ENCODE measurements at regions of chr7 and their contacts with region 1.

Region 1: GRCh38 chr7:108181073-108181985 is 51.2 kb upstream of the LAMB4 start:
- DNase-seq: no peak
- H3K4me3 ChIP-seq: no peak overlapping the region
- H3K27ac ChIP-seq: no peak overlapping the region
- H3K4me1 ChIP-seq: no peaks in the 10 kb centered on the region
- H3K27me3 ChIP-seq: no peaks in the 10 kb centered on the region
- CTCF ChIP-seq: peak; percentile 59 to 81 (median 64)
- POLR2A ChIP-seq: no peak

Region 2: DNA sequence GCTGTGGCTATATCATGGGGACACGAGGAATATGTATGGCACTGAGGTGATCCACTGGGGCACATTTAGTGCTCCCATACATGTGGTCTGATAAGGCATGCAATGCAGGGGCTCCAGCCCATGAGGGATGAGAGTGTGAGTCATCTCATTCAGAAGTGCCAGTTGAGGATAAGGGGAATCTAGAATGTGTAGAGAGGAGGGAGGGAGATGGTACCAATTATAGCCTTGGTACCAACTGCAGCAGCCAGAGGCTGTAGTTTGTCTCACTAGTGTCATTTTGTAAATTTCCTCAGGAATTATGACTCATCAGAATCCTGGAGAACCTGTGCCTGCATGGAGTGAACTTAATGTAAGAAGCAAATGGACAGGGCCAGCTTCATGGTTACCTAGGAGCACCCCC is 97.3 kb before region 1 on chr7:
- intact Hi-C with region 1: no loop called
- DNase-seq: no peak
- H3K4me3 ChIP-seq: no peak overlapping the region
- H3K27ac ChIP-seq: no peak overlapping the region
- H3K4me1 ChIP-seq: peaks cover 0 to 16% (median 14%) of the 10 kb centered on the region in 3 donors
- H3K27me3 ChIP-seq: no peaks in the 10 kb centered on the region
- CTCF ChIP-seq: no peak
- POLR2A ChIP-seq: no peak

Region 3: GRCh38 chr7:108313086-108313485 is 131.8 kb after region 1 on chr7:
- intact Hi-C with region 1: no loop called
- DNase-seq: no peak
- H3K4me3 ChIP-seq: no peak overlapping the region
- H3K27ac ChIP-seq: peak overlapping the region in 1 of 4 donors; percentile 80
- H3K4me1 ChIP-seq: peaks cover 4 to 64% (median 30%) of the 10 kb centered on the region in 3 donors
- H3K27me3 ChIP-seq: no peaks in the 10 kb centered on the region
- CTCF ChIP-seq: no peak
- POLR2A ChIP-seq: no peak

Region 4: GRCh38 chr7:108459931-108460551 is 278.7 kb after region 1 on chr7:
- intact Hi-C with region 1: loop called (anchors 10 kb)
- DNase-seq: no peak
- H3K4me3 ChIP-seq: no peak overlapping the region
- H3K27ac ChIP-seq: no peak overlapping the region
- H3K4me1 ChIP-seq: peaks cover 8 to 20% (median 9%) of the 10 kb centered on the region in 3 donors
- H3K27me3 ChIP-seq: peaks cover 0 to 50% (median 8%) of the 10 kb centered on the region in 4 donors
- CTCF ChIP-seq: peak in 4 of 6 experiments; percentile 24 to 51 (median 30)
- POLR2A ChIP-seq: no peak

Region 5: DNA sequence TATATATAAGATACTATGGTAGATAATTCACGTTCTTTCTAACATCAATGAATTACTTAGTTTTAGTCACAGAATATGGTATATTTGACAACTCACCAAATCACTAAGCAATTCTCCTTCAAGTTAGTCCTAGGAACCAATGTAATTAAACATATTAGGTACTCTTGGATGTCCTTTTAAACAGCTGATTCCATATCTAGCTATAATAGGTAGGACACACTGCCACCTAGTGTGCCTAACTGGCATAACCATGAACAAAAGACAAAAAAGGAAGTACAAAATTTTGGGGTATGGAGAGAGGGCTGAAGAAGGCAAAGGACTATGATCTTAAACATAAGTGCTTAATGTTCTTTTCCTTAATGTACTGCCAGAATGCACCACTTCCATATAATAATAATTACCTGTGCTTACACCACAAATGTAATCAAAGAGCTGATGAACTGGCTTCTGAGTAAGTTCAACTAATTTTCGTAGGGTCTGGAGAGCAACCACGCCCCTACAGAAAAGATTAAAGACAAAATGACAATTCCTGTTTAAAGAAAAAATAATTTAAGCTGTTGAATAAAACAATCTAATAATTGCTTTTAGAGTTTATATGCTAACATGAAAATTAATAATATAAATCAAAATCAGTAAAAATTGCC is 315.9 kb after region 1 on chr7:
- intact Hi-C with region 1: loop called (anchors 10 kb)
- DNase-seq: no peak
- H3K4me3 ChIP-seq: no peak overlapping the region
- H3K27ac ChIP-seq: no peak overlapping the region
- H3K4me1 ChIP-seq: no peaks in the 10 kb centered on the region
- H3K27me3 ChIP-seq: no peaks in the 10 kb centered on the region
- CTCF ChIP-seq: peak; percentile 67 to 85 (median 80)
- POLR2A ChIP-seq: no peak

Measured in esophagus squamous epithelium (tissue), 5 donors.